HCT116 (cell line): ENCODE measurements at regions of chr16 and their contacts with region 1.

Region 1: GRCh38 chr16:49350265-49351095 is 23.1 kb upstream of the C16orf78 start:
- DNase-seq: peak; percentile 27
- ATAC-seq: peak; percentile 85
- H3K4me3 ChIP-seq: no peak overlapping the region
- H3K27ac ChIP-seq: no peak overlapping the region
- H3K4me1 ChIP-seq: no peaks in the 10 kb centered on the region
- H3K27me3 ChIP-seq: peaks cover 9% of the 10 kb centered on the region; the same call in 1 of the 2 replicates
- CTCF ChIP-seq: peak; percentile 62 to 89 (median 81); a peak in 5 of 6 replicates
- POLR2A ChIP-seq: no peak
- RAD21 ChIP-seq: peak; percentile 81

Region 2: GRCh38 chr16:48687421-48688038 is 663.0 kb before region 1 on chr16:
- CTCF ChIA-PET with region 1: interaction called, 12 read pairs
- POLR2A ChIA-PET with region 1: no interaction called
- RAD21 ChIA-PET with region 1: interaction called in 1 of 2 experiments, 3 read pairs
- intact Hi-C with region 1: loop called (anchors 1 kb)
- DNase-seq: peak; percentile 60
- ATAC-seq: peak; percentile 100
- H3K4me3 ChIP-seq: no peak overlapping the region
- H3K27ac ChIP-seq: no peak overlapping the region
- H3K4me1 ChIP-seq: no peaks in the 10 kb centered on the region
- H3K27me3 ChIP-seq: peaks cover 16% of the 10 kb centered on the region
- CTCF ChIP-seq: peak; percentile 59 to 75 (median 65); a peak in 5 of 6 replicates
- POLR2A ChIP-seq: no peak
- RAD21 ChIP-seq: peak; percentile 81

Region 3: GRCh38 chr16:48911700-48912099 is 438.8 kb before region 1 on chr16:
- CTCF ChIA-PET with region 1: interaction called, 4 read pairs
- POLR2A ChIA-PET with region 1: no interaction called
- RAD21 ChIA-PET with region 1: no interaction called
- intact Hi-C with region 1: loop called (anchors 2 kb)
- DNase-seq: peak; percentile 12
- ATAC-seq: peak; percentile 68
- H3K4me3 ChIP-seq: no peak overlapping the region
- H3K27ac ChIP-seq: no peak overlapping the region
- H3K4me1 ChIP-seq: no peaks in the 10 kb centered on the region
- H3K27me3 ChIP-seq: no peaks in the 10 kb centered on the region
- CTCF ChIP-seq: peak; percentile 33 to 63 (median 40); a peak in 5 of 6 replicates
- POLR2A ChIP-seq: no peak
- RAD21 ChIP-seq: peak; percentile 53

Region 4: GRCh38 chr16:49000594-49000993 is 349.9 kb before region 1 on chr16:
- CTCF ChIA-PET with region 1: no interaction called
- POLR2A ChIA-PET with region 1: no interaction called
- RAD21 ChIA-PET with region 1: no interaction called
- intact Hi-C with region 1: loop called (anchors 1 kb)
- DNase-seq: peak; percentile 26
- ATAC-seq: peak; percentile 89
- H3K4me3 ChIP-seq: no peak overlapping the region
- H3K27ac ChIP-seq: no peak overlapping the region
- H3K4me1 ChIP-seq: peaks cover 0 to 3% of the 10 kb centered on the region in 2 experiments; a peak in 1 of 4 replicates
- H3K27me3 ChIP-seq: no peaks in the 10 kb centered on the region
- CTCF ChIP-seq: peak; percentile 38 to 87 (median 87); a peak in 5 of 6 replicates
- POLR2A ChIP-seq: no peak
- RAD21 ChIP-seq: peak; percentile 54

Region 5: DNA sequence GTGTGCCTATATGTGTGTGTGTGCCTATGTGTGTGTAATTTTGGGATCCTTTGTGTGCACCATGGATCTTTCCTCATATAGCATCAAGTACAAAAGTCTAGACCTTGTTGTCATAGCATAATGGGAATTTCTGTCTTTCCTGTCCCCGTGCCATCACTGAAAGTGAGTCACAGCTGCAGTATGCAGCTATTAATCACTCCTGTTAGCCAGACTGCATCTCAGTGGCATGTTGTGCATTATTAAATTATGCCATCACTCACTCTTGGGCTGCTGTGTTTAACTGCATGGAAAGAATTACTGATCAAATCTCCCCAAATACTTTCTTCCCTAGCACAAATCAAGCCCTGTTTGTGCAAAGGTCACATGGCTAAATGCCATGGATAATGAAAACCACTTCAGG is 161.2 kb before region 1 on chr16:
- CTCF ChIA-PET with region 1: no interaction called
- POLR2A ChIA-PET with region 1: no interaction called
- RAD21 ChIA-PET with region 1: no interaction called
- intact Hi-C with region 1: no loop called
- DNase-seq: no peak
- ATAC-seq: no peak
- H3K4me3 ChIP-seq: no peak overlapping the region
- H3K27ac ChIP-seq: no peak overlapping the region
- H3K4me1 ChIP-seq: no peaks in the 10 kb centered on the region
- H3K27me3 ChIP-seq: peaks cover 11% of the 10 kb centered on the region; the same call in 1 of the 2 replicates
- CTCF ChIP-seq: no peak
- POLR2A ChIP-seq: no peak
- RAD21 ChIP-seq: no peak

Region 6: GRCh38 chr16:49369651-49370611 is 19.5 kb after region 1 on chr16:
- CTCF ChIA-PET with region 1: no interaction called
- POLR2A ChIA-PET with region 1: no interaction called
- RAD21 ChIA-PET with region 1: no interaction called
- intact Hi-C with region 1: no loop called
- DNase-seq: no peak
- ATAC-seq: no peak
- H3K4me3 ChIP-seq: no peak overlapping the region
- H3K27ac ChIP-seq: no peak overlapping the region
- H3K4me1 ChIP-seq: no peaks in the 10 kb centered on the region
- H3K27me3 ChIP-seq: 0 out of 2 replicates have a peak, but pooled peaks cover 11% of the 10 kb centered on the region
- CTCF ChIP-seq: no peak
- POLR2A ChIP-seq: no peak
- RAD21 ChIP-seq: no peak